Psoas muscle (tissue), 8 donors: ENCODE measurements at regions of chr19 and their contacts with region 1.

Region 1: DNA sequence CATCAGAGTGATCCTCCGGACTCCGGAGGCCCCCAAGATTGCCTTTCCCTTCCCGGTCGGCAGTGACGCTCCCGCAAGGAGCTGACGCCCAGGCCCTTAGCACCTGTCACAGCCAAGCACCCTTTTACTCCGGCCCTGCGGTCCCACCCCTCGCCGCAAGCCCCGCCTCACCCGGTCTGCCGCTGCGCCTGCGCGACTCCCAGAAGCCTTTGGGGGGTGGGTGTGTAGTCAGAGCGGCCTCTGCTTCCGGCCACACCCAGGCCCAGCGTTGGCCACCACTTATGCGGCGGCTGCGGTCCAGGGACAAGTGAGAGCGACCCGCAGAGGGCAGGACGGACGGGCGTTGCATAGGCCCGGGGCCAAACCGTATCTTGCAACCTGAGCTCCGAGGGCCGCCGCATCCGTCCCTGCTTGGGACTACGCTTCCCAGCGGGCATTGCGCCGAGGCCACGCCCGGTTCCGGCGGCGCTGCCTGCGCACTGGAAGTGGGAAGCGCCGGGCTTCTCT is 441 bp upstream of the ZFP28 start:
- DNase-seq: peak; percentile 90 to 96
- ATAC-seq: peak; percentile 97 to 99 (median 98)
- H3K4me3 ChIP-seq: peak overlapping the region; percentile 97
- H3K27ac ChIP-seq: peak overlapping the region; percentile 97
- H3K4me1 ChIP-seq: peaks cover 4% of the 10 kb centered on the region
- H3K27me3 ChIP-seq: no peaks in the 10 kb centered on the region
- CTCF ChIP-seq: no peak

Region 2: GRCh38 chr19:56567274-56568120 is 29.2 kb after region 1 on chr19 and contains the start of gene ZNF470:
- intact Hi-C with region 1: loop called in 1 of 2 experiments (anchors 2 kb)
- DNase-seq: peak; percentile 97
- ATAC-seq: peak; percentile 98 to 100 (median 100)
- H3K4me3 ChIP-seq: peak within 1 kb of the TSS; percentile 100
- H3K27ac ChIP-seq: peak within 1 kb of the TSS; percentile 84
- H3K4me1 ChIP-seq: no peaks in the 10 kb centered on the region
- H3K27me3 ChIP-seq: no peaks in the 10 kb centered on the region
- CTCF ChIP-seq: no peak
- total RNA-seq, gene ZNF470: 0.87 to 2.6 (median 1.6) TPM